Endothelial cell of umbilical vein (primary cell): ENCODE measurements at regions of chr2 and their contacts with region 1.

Region 1: GRCh38 chr2:224585205-224586088 is at the start of gene CUL3:
- DNase-seq: peak; percentile 98
- H3K4me3 ChIP-seq: peak within 1 kb of the TSS; percentile 69 to 96 (median 85)
- H3K27ac ChIP-seq: peak within 1 kb of the TSS; percentile 74
- H3K4me1 ChIP-seq: peaks cover 18% of the 10 kb centered on the region
- H3K27me3 ChIP-seq: no peaks in the 10 kb centered on the region
- CTCF ChIP-seq: no peak
- POLR2A ChIP-seq: peak; percentile 62
- total RNA-seq, gene CUL3: 82.3 and 87.1 TPM in 2 replicates

Region 2: GRCh38 chr2:224357098-224357901 is 228.1 kb before region 1 on chr2:
- CTCF ChIA-PET with region 1: interaction called, 3 read pairs
- POLR2A ChIA-PET with region 1: no interaction called
- dilution Hi-C with region 1: no loop called
- intact Hi-C with region 1: loop called (anchors 5 kb)
- DNase-seq: peak; percentile 82
- H3K4me3 ChIP-seq: no peak overlapping the region
- H3K27ac ChIP-seq: no peak overlapping the region
- H3K4me1 ChIP-seq: no peaks in the 10 kb centered on the region
- H3K27me3 ChIP-seq: peaks cover 0 to 3% of the 10 kb centered on the region in 2 experiments
- CTCF ChIP-seq: peak; percentile 44 to 68
- POLR2A ChIP-seq: no peak

Region 3: DNA sequence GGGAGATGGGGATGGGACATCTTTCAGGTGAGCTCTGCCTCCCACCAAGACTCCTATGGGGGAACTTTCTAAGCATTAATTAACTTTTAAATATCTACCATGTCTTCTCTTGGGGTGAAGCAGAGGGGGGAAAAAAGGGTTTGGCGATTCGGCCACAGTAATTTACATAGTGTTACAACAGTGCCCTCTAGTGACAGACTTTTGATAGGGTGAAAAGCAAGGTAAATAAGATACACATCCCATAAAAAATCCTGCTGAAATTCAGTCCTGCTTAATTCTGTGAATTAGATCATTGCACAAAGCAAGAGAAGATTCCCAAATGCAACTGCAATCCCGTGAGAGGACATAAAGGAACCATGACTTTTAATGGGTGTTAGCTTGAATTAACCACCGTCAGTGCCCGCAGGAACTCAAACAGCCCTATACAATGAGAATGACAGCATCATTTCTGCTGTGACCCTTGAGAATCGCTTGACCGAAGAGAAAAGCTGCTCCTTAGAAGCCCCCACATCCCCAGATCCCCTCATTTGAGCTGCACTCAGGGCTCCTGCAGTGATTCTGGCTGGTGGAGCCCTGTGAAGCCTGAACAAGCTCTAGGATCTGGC is 216.3 kb before region 1 on chr2:
- CTCF ChIA-PET with region 1: interaction called, 10 read pairs
- POLR2A ChIA-PET with region 1: no interaction called
- dilution Hi-C with region 1: no loop called
- intact Hi-C with region 1: no loop called
- DNase-seq: no peak
- H3K4me3 ChIP-seq: no peak overlapping the region
- H3K27ac ChIP-seq: no peak overlapping the region
- H3K4me1 ChIP-seq: no peaks in the 10 kb centered on the region
- H3K27me3 ChIP-seq: no peaks in the 10 kb centered on the region
- CTCF ChIP-seq: peak; percentile 49 to 50
- POLR2A ChIP-seq: no peak

Region 4: GRCh38 chr2:224407241-224407701 is 178.2 kb before region 1 on chr2:
- CTCF ChIA-PET with region 1: no interaction called
- POLR2A ChIA-PET with region 1: no interaction called
- dilution Hi-C with region 1: no loop called
- intact Hi-C with region 1: loop called (anchors 1 kb)
- DNase-seq: peak; percentile 100
- H3K4me3 ChIP-seq: no peak overlapping the region
- H3K27ac ChIP-seq: peak overlapping the region; percentile 96
- H3K4me1 ChIP-seq: peaks cover 43% of the 10 kb centered on the region
- H3K27me3 ChIP-seq: no peaks in the 10 kb centered on the region
- CTCF ChIP-seq: no peak
- POLR2A ChIP-seq: peak; percentile 65

Region 5: DNA sequence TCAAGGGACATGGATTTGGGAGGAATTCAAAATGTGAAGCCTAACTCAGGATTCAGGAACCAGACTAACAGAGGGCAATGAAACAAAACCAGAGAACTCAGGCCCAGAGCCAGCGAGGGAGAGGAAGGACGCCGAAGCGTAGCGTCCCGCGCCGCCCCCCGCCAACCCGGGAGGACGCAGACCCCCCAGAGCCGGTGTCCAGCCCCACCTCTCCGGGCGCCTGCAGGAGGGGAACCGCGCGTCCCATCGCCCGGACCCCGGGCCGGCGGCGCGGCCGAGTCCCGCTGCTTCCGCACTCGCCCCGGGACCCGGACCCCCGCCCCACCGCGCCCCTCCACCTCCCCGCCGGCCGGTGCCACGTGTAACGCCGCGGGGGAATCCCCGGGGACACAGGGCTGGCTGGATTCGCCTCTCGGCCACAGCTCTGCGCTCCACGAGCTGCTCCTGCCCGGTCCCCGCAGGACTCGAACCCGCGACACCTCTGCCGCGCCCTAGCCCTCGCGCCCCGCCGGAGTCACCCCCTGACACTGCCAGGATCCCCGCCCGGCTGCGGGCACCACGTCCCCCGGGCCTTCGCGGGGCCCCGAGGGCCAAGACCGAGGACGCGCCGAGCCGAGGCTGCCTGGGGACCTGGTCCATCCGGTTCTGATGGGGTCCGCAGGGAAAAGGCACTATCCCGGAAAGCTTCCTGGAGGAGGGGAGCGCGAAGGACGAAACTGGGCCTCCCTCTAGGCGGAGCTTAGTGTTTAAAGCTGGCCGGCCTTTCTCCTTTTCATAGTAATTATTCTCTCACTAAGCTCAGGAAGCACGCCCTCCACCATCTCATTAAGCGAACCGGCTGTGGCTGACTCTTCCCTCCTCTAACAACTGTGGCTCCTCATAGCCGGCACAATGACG is 143.1 kb before region 1 on chr2:
- CTCF ChIA-PET with region 1: no interaction called
- POLR2A ChIA-PET with region 1: interaction called, 3 read pairs
- dilution Hi-C with region 1: no loop called
- intact Hi-C with region 1: loop called (anchors 2 kb)
- DNase-seq: peak; percentile 61
- H3K4me3 ChIP-seq: peak overlapping the region; percentile 44 to 86 (median 69)
- H3K27ac ChIP-seq: peak overlapping the region; percentile 62
- H3K4me1 ChIP-seq: peaks cover 17% of the 10 kb centered on the region
- H3K27me3 ChIP-seq: no peaks in the 10 kb centered on the region
- CTCF ChIP-seq: no peak
- POLR2A ChIP-seq: peak; percentile 24

Region 6: GRCh38 chr2:224479826-224480225 is 105.6 kb before region 1 on chr2:
- CTCF ChIA-PET with region 1: no interaction called
- POLR2A ChIA-PET with region 1: no interaction called
- dilution Hi-C with region 1: no loop called
- intact Hi-C with region 1: loop called (anchors 2 kb)
- DNase-seq: no peak
- H3K4me3 ChIP-seq: no peak overlapping the region
- H3K27ac ChIP-seq: no peak overlapping the region
- H3K4me1 ChIP-seq: peaks cover 2% of the 10 kb centered on the region
- H3K27me3 ChIP-seq: no peaks in the 10 kb centered on the region
- CTCF ChIP-seq: no peak
- POLR2A ChIP-seq: no peak

Region 7: DNA sequence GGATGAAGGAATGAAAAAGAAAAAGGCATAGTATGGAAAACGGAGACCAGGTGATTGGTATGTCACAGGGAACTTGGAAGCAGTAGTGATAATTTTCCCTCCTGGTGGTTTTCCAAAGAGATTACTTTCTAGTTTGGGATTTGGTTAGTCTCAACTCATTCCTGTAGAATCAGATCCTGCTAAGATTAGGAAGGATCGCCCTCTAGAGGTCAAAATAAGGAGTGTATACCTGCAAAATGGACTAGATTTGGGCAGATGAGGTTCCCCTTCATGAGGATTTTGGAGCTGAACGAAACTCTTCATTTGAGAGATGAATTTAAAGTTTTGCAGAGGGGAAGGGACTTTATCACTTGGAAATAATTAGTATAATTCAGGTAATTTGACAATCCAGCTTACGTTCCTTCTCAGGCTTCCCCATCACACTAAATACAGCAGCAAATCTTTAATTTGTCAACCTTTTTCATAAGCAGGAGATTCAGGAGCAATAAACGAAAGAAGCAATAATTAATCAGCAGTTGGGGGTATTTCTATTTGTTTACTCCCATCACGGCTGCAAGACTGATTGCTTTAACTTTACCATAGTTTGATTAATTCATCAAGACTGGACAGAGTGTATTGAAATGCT is 65.5 kb after region 1 on chr2:
- CTCF ChIA-PET with region 1: interaction called, 4 read pairs
- POLR2A ChIA-PET with region 1: no interaction called
- dilution Hi-C with region 1: no loop called
- intact Hi-C with region 1: loop called (anchors 2 kb)
- DNase-seq: peak; percentile 61
- H3K4me3 ChIP-seq: no peak overlapping the region
- H3K27ac ChIP-seq: no peak overlapping the region
- H3K4me1 ChIP-seq: no peaks in the 10 kb centered on the region
- H3K27me3 ChIP-seq: no peaks in the 10 kb centered on the region
- CTCF ChIP-seq: peak; percentile 49 to 60
- POLR2A ChIP-seq: no peak

Region 8: DNA sequence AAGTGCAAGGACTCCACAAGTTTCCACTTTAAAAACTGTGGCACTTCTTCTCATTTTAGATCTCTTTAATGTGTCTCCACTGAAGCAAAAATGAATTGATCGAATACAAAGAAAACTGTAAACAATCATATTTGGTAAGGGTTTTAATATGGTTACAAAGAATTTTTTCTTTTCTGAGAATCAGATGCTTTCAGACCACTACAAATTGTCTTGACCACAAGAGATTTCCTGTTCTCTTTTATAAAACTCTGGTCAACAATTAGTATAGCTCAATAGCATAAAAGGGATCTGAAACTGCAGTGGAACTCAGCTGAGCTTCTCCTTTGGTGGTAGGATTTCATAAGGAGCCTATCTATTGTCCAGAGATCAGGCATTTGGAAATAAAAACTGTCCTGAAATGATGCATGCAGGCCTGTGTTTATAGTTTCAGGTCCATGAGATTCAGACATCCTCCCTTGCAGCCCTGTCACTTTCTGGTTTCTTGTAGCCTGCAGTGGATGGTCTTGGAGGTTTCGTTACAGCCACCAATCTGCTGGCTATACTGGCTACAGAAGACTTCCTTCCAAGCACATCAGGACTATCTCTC is 336.8 kb after region 1 on chr2:
- CTCF ChIA-PET with region 1: no interaction called
- POLR2A ChIA-PET with region 1: no interaction called
- dilution Hi-C with region 1: no loop called
- intact Hi-C with region 1: no loop called
- DNase-seq: no peak
- H3K4me3 ChIP-seq: no peak overlapping the region
- H3K27ac ChIP-seq: no peak overlapping the region
- H3K4me1 ChIP-seq: peaks cover 20% of the 10 kb centered on the region
- H3K27me3 ChIP-seq: no peaks in the 10 kb centered on the region
- CTCF ChIP-seq: no peak
- POLR2A ChIP-seq: no peak